Endothelial cell of umbilical vein (primary cell): ENCODE measurements at regions of chr20 and their contacts with region 1.

Region 1: GRCh38 chr20:23050847-23051631 is 1.6 kb upstream of the THBD start:
- DNase-seq: peak; percentile 94
- H3K4me3 ChIP-seq: peak overlapping the region; percentile 15 to 62 (median 50)
- H3K27ac ChIP-seq: peak overlapping the region; percentile 62
- H3K4me1 ChIP-seq: peaks cover 16% of the 10 kb centered on the region
- H3K27me3 ChIP-seq: no peaks in the 10 kb centered on the region
- CTCF ChIP-seq: peak; percentile 82 to 85
- POLR2A ChIP-seq: peak; percentile 44

Region 2: DNA sequence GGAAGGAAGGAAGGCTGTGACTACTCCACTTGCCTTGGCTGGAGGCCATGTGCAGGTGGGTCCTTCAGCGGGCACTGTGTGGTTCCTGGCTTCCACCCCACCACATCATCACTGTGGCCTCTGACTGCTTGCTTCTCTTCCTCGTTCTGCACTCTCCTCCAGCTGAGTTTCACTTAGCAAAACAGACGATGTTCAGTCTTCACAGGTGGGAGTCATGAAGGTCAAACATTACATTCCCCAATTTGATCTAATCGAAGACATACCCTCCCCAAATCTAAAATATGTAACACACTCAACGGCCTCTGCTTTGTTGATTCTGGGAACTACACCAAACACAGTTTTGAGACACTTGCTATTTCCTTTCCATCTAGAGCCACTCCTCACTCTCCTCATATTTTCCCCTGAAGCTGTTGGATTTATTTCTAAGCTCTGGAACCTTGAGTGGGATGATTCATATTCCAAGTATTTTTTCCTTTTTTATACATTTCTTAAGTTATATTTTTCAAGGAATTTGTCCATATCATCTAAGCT is 334.2 kb before region 1 on chr20:
- CTCF ChIA-PET with region 1: interaction called, 12 read pairs
- POLR2A ChIA-PET with region 1: no interaction called
- dilution Hi-C with region 1: no loop called
- intact Hi-C with region 1: no loop called
- DNase-seq: peak; percentile 68
- H3K4me3 ChIP-seq: no peak overlapping the region
- H3K27ac ChIP-seq: peak overlapping the region; percentile 59
- H3K4me1 ChIP-seq: peaks cover 39% of the 10 kb centered on the region
- H3K27me3 ChIP-seq: no peaks in the 10 kb centered on the region
- CTCF ChIP-seq: no peak
- POLR2A ChIP-seq: no peak

Region 3: DNA sequence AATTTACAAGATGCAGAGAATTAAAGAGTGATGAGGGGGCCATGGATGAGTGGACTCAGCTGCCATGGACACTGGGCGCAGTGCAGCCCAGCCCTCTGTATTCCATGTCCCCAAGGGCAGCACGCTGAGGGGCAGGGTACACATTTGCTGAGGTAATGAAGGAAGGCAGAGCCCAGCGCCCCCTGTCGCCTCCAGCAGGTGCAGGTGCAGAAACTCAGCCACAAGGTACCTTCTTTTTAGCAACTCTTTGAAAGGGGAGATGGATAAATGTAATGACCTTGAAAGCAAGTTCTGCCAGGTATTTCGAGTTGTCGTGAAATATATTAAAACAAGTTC is 27.9 kb after region 1 on chr20:
- CTCF ChIA-PET with region 1: interaction called, 27 read pairs
- POLR2A ChIA-PET with region 1: interaction called, 9 read pairs
- dilution Hi-C with region 1: no loop called
- intact Hi-C with region 1: no loop called
- DNase-seq: no peak
- H3K4me3 ChIP-seq: no peak overlapping the region
- H3K27ac ChIP-seq: no peak overlapping the region
- H3K4me1 ChIP-seq: peaks cover 52% of the 10 kb centered on the region
- H3K27me3 ChIP-seq: no peaks in the 10 kb centered on the region
- CTCF ChIP-seq: peak in 1 of 2 donors; percentile 15
- POLR2A ChIP-seq: no peak

Region 4: GRCh38 chr20:23161968-23162696 is 111.1 kb after region 1 on chr20:
- CTCF ChIA-PET with region 1: interaction called, 24 read pairs
- POLR2A ChIA-PET with region 1: no interaction called
- dilution Hi-C with region 1: no loop called
- intact Hi-C with region 1: no loop called
- DNase-seq: peak; percentile 58
- H3K4me3 ChIP-seq: no peak overlapping the region
- H3K27ac ChIP-seq: peak overlapping the region; percentile 49
- H3K4me1 ChIP-seq: peaks cover 35% of the 10 kb centered on the region
- H3K27me3 ChIP-seq: no peaks in the 10 kb centered on the region
- CTCF ChIP-seq: no peak
- POLR2A ChIP-seq: no peak

Region 5: DNA sequence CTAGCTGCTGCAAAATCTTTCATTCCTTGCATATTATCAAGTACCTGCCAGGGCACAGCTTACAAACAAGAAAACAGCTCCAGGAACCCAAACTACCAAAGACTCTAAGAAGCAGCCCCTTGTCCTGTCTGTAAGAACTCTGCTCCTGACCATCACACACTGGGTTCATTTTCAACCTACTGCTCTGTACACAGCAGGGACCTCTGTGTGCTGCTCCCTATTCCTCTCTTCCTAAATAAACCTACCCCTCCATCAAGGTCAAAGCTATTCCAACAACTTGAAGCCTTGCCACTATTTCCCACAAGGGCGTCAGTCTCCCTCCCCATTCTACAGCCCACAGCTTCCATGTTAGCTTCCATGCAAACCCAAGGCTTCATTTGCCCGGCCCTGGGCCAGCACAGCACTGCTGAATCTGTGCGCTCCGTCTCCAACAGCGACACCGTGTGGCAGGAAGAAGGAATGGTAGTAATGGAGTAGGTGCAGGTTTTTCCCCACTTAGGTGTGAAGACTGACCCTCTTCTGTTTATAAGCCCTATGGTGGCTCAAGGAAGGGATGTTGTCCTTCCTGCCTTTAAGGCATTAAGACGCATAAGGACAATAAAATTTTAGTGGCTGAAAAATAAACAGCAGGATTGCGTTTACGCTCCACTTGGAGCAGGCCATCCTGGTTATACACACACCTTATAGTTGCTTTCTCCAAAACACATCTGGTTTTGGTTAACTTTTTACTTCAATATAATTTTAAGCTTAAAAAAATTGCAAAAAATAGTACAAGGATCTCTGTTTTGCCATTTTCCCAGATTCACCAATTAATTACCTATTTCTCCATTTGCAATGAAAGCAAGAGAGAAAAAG is 184.4 kb after region 1 on chr20:
- CTCF ChIA-PET with region 1: interaction called, 96 read pairs
- POLR2A ChIA-PET with region 1: no interaction called
- dilution Hi-C with region 1: no loop called
- intact Hi-C with region 1: loop called (anchors 1 kb)
- DNase-seq: peak; percentile 72
- H3K4me3 ChIP-seq: no peak overlapping the region
- H3K27ac ChIP-seq: no peak overlapping the region
- H3K4me1 ChIP-seq: peaks cover 5% of the 10 kb centered on the region
- H3K27me3 ChIP-seq: peaks cover 2 to 4% of the 10 kb centered on the region in 2 experiments
- CTCF ChIP-seq: peak; percentile 80 to 85
- POLR2A ChIP-seq: no peak

Region 6: DNA sequence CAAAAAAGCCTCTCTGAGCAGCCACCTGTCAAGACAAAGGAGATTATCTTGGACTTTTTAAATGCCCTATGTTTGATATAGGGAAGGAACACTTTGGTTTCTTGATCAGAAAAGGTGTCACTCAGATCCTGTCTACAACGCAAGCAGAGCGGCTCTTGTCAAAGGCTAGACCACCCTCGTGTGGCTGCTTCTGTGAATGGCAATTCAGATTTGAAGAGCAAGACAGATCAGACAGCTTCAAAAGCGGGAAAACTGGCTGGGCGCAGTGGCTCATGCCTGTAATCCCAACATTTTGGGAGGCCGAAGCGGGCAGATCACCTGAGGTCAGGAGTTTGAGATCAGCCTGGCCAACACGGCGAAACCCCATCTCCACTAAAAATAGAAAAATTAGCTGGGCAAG is 289.5 kb after region 1 on chr20:
- CTCF ChIA-PET with region 1: interaction called, 152 read pairs
- POLR2A ChIA-PET with region 1: interaction called, 8 read pairs
- dilution Hi-C with region 1: no loop called
- intact Hi-C with region 1: loop called (anchors 1 kb)
- DNase-seq: peak; percentile 84
- H3K4me3 ChIP-seq: no peak overlapping the region
- H3K27ac ChIP-seq: no peak overlapping the region
- H3K4me1 ChIP-seq: no peaks in the 10 kb centered on the region
- H3K27me3 ChIP-seq: peaks cover 2 to 3% of the 10 kb centered on the region in 2 experiments
- CTCF ChIP-seq: peak; percentile 64 to 71
- POLR2A ChIP-seq: no peak